ENCODE measurements at regions of chr22 and their contacts with region 1.

Region 1: GRCh38 chr22:30089655-30089974 is 9.4 kb downstream of the HORMAD2 start:
- DNase-seq: no peak
- ATAC-seq: no peak
- H3K4me3 ChIP-seq: no peak overlapping the region
- H3K4me3 Mint-ChIP-seq: no peak overlapping the region
- H3K27ac ChIP-seq: no peak overlapping the region
- H3K27ac Mint-ChIP-seq: no peak overlapping the region
- H3K4me1 ChIP-seq: peaks cover 5% of the 10 kb centered on the region
- H3K4me1 Mint-ChIP-seq: peaks cover 7% of the 10 kb centered on the region
- H3K27me3 ChIP-seq: no peaks in the 10 kb centered on the region
- H3K27me3 Mint-ChIP-seq: peaks cover 15% of the 10 kb centered on the region
- CTCF ChIP-seq: no peak

Region 2: DNA sequence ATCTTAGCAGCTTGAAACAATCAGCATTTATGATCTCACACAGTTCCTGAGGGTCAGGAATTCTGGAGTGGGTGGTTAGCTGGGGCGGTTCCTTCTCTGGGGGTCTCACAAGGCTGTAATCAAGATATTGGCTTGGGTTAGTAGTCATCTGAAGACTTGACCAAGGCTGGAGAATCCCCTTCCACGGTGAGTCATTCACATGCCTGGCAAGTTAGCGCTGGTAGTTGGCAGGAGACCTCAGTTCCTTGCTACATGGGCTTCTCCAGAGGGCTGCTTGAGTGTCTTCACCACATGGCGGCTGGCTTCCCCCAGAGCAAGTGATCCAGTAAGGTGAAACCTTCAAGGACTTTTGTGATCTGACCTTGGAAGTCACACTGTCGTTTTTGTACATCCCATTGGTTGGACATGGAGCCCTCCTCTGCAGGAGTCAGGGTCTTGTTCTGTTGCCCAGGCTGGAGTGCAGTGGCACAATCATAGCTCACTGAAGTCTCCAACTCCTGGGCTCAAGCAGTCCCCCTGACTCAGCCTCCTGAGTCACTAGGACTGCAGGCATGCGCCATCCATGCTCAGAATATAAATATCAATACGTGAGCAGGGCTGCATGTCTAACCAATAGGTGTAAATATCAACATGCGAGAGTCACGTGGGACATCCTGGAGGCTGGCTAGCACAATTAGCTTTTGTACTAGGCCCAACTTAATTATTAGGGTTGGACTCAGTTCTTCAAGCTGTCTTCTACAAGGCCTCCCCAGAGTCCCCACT is 501.5 kb before region 1 on chr22:
- CTCF ChIA-PET with region 1: interaction called, 4 read pairs
- POLR2A ChIA-PET with region 1: no interaction called
- intact Hi-C with region 1: loop called (anchors 1 kb)
- DNase-seq: no peak
- ATAC-seq: no peak
- H3K4me3 ChIP-seq: no peak overlapping the region
- H3K4me3 Mint-ChIP-seq: no peak overlapping the region
- H3K27ac ChIP-seq: no peak overlapping the region
- H3K27ac Mint-ChIP-seq: peak overlapping the region; percentile 37
- H3K4me1 ChIP-seq: peaks cover 6% of the 10 kb centered on the region
- H3K4me1 Mint-ChIP-seq: peaks cover 9% of the 10 kb centered on the region
- H3K27me3 ChIP-seq: no peaks in the 10 kb centered on the region
- H3K27me3 Mint-ChIP-seq: no peaks in the 10 kb centered on the region
- CTCF ChIP-seq: no peak

Region 3: DNA sequence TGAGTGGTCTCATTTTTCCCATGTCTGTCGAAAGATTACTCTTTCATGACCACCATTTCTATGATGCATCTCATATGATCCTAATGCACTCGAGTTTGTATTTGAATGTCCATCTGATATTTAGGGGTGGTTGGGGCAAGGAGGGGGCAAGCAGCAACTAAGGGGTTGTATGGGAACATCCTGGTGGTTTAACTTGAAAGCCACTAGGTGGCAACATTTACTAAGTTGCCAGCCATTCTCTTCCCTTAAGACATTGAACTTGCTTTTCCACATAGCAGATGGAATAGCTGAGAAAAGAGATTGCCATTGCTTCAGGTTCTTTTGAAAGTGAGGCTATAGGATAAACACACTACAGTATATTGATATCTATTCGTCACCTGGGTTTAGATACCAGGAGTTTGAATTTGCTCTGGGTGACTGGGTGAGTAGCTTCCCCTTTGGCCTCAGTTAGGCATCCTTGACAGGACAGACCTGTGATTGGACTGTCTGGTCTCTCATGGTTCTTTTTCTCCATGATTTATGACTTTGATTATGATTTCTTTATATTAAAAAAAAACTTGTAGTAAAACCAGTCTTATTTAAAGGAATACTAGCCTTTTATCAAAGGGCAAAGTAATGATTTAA is 453.8 kb before region 1 on chr22:
- CTCF ChIA-PET with region 1: interaction called, 4 read pairs
- POLR2A ChIA-PET with region 1: no interaction called
- intact Hi-C with region 1: loop called (anchors 2 to 10 kb)
- DNase-seq: peak in 2 of 9 experiments; percentile 34 to 51
- ATAC-seq: no peak
- H3K4me3 ChIP-seq: no peak overlapping the region
- H3K4me3 Mint-ChIP-seq: no peak overlapping the region
- H3K27ac ChIP-seq: no peak overlapping the region
- H3K27ac Mint-ChIP-seq: no peak overlapping the region
- H3K4me1 ChIP-seq: no peaks in the 10 kb centered on the region
- H3K4me1 Mint-ChIP-seq: peaks cover 29% of the 10 kb centered on the region
- H3K27me3 ChIP-seq: no peaks in the 10 kb centered on the region
- H3K27me3 Mint-ChIP-seq: no peaks in the 10 kb centered on the region
- CTCF ChIP-seq: peak; percentile 47

Region 4: GRCh38 chr22:29689880-29690213 is 399.8 kb before region 1 on chr22:
- CTCF ChIA-PET with region 1: no interaction called
- POLR2A ChIA-PET with region 1: no interaction called
- intact Hi-C with region 1: loop called in 1 of 2 experiments (anchors 5 kb)
- DNase-seq: peak in 4 of 9 experiments; percentile 16 to 35 (median 29)
- ATAC-seq: no peak
- H3K4me3 ChIP-seq: no peak overlapping the region
- H3K4me3 Mint-ChIP-seq: no peak overlapping the region
- H3K27ac ChIP-seq: no peak overlapping the region
- H3K27ac Mint-ChIP-seq: no peak overlapping the region
- H3K4me1 ChIP-seq: no peaks in the 10 kb centered on the region
- H3K4me1 Mint-ChIP-seq: no peaks in the 10 kb centered on the region
- H3K27me3 ChIP-seq: no peaks in the 10 kb centered on the region
- H3K27me3 Mint-ChIP-seq: no peaks in the 10 kb centered on the region
- CTCF ChIP-seq: no peak